Ovary (tissue), 10 donors: ENCODE measurements at regions of chr1 and their contacts with region 1.

Region 1: GRCh38 chr1:195754874-195755273 is 853.4 kb downstream of the KCNT2 start:
- DNase-seq: no peak
- H3K4me3 ChIP-seq: no peak overlapping the region
- H3K27ac ChIP-seq: no peak overlapping the region
- H3K4me1 ChIP-seq: no peaks in the 10 kb centered on the region
- H3K27me3 ChIP-seq: no peaks in the 10 kb centered on the region
- CTCF ChIP-seq: no peak
- EP300 ChIP-seq: no peak
- POLR2A ChIP-seq: no peak

Region 2: DNA sequence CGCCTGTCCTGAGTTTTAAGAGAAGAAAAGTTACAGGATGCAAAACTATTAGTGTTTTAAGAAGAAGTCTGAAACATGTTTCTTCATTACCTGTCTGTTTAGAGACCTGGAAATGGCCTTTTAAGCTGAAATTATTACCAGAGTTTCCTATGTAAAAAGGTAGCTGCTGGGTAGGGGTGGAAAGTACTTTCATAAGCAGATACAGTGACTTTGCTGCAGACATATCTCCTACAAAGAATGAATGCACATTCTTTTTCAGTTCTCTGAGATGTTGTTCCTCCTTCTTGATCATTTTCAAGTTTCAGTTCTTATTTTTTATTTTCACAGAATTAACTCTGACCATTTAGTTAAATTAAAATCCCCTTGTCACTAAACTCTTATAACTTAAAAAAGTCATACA is 476.2 kb before region 1 on chr1:
- intact Hi-C with region 1: loop called in 1 of 4 experiments (anchors 5 kb)
- DNase-seq: no peak
- H3K4me3 ChIP-seq: no peak overlapping the region
- H3K27ac ChIP-seq: no peak overlapping the region
- H3K4me1 ChIP-seq: no peaks in the 10 kb centered on the region
- H3K27me3 ChIP-seq: no peaks in the 10 kb centered on the region
- CTCF ChIP-seq: no peak
- EP300 ChIP-seq: no peak
- POLR2A ChIP-seq: no peak